ENCODE measurements at regions of chr4 and their contacts with region 1.

Region 1: DNA sequence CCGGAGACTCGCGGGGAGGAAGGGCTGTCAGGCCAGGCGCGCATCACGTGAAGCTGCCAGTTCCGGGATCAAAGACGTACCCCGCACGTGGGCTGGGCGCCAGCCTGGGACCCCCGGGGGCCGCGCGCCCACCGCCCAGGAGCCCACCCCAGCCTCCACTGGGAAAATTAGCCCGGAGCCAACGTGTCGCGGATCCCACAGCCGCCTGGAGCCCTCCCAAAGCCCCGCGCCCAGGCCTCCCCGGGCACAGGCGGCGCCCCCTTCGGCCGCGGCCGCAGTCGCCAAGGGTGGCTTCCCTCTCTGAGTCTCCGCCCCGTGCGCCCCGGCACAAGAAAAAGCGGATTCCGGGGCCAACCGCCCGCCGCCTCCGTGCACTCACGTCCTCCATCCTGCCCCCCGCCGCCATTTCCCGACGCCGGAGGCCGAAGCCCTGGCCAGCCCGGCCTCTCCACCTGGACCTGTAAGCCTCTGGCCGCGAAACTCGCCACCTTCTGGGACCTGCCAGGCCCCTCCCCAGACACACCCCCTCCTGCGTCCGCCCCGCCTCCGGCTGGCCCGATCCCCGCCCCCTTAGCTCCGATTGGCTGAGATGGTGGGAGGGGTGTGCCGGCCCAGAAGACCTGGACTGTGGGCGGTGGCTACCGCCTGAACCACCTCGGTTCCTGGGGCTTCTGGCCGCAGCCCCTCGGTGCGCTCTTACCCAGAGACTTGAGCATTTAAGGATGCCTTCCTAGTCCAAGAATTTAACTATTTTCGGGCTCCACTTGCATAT is at the start of gene TMEM192:
- DNase-seq: peak; percentile 90 to 93
- ATAC-seq: peak; percentile 93 to 95
- H3K4me3 ChIP-seq: peak within 1 kb of the TSS; percentile 76 to 98 (median 88)
- H3K27ac ChIP-seq: peak within 1 kb of the TSS; percentile 85 to 96 (median 92)
- H3K4me1 ChIP-seq: peaks cover 10 to 11% of the 10 kb centered on the region in 2 donors
- H3K27me3 ChIP-seq: peaks cover 0 to 2% (median 0%) of the 10 kb centered on the region in 3 donors
- CTCF ChIP-seq: peak in 3 of 5 experiments; percentile 17 to 30 (median 21)
- POLR2A ChIP-seq: peak; percentile 78 to 86
- total RNA-seq, gene TMEM192: 15.3 to 28.9 (median 17.8) TPM

Region 2: GRCh38 chr4:163166041-163166579 is 1946.4 kb before region 1 on chr4:
- in situ Hi-C with region 1: no loop called
- intact Hi-C with region 1: loop called (anchors 10 kb)
- DNase-seq: peak; percentile 20 to 49
- ATAC-seq: peak; percentile 40 to 64
- H3K4me3 ChIP-seq: peak overlapping the region; percentile 71 to 99 (median 84)
- H3K27ac ChIP-seq: peak overlapping the region; percentile 87 to 97 (median 93)
- H3K4me1 ChIP-seq: peaks cover 22 to 29% of the 10 kb centered on the region in 2 donors
- H3K27me3 ChIP-seq: no peaks in the 10 kb centered on the region
- CTCF ChIP-seq: no peak
- POLR2A ChIP-seq: no peak

Region 3: GRCh38 chr4:164748375-164748774 is 364.2 kb before region 1 on chr4:
- in situ Hi-C with region 1: no loop called
- intact Hi-C with region 1: no loop called
- DNase-seq: no peak
- ATAC-seq: no peak
- H3K4me3 ChIP-seq: no peak overlapping the region
- H3K27ac ChIP-seq: no peak overlapping the region
- H3K4me1 ChIP-seq: no peaks in the 10 kb centered on the region
- H3K27me3 ChIP-seq: no peaks in the 10 kb centered on the region
- CTCF ChIP-seq: no peak
- POLR2A ChIP-seq: no peak

Region 4: DNA sequence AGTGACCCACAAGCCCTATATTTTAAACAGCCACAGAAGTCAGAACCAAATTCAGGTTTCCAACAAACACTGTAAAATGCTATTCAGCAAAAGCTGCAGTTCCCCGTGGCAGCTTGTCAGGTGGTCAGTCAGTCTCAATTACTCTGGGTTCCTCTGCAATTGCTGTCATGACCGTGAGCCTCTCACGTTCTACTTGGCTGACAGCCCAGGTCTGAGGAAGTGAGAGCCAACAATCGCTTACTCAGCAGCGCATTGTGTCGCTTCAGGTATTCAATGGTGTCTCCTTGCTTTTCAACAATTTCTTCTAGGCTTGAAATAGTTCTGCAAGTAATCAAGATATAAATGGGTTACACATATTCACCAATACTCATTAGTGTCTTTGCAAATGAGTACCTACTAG is 33.1 kb before region 1 on chr4:
- in situ Hi-C with region 1: no loop called
- intact Hi-C with region 1: loop called (anchors 2 kb)
- DNase-seq: peak; percentile 78 to 83
- ATAC-seq: peak; percentile 100
- H3K4me3 ChIP-seq: no peak overlapping the region
- H3K27ac ChIP-seq: peak overlapping the region; percentile 34 to 56 (median 45)
- H3K4me1 ChIP-seq: peaks cover 2 to 4% of the 10 kb centered on the region in 2 donors
- H3K27me3 ChIP-seq: no peaks in the 10 kb centered on the region
- CTCF ChIP-seq: no peak
- POLR2A ChIP-seq: no peak

Region 5: DNA sequence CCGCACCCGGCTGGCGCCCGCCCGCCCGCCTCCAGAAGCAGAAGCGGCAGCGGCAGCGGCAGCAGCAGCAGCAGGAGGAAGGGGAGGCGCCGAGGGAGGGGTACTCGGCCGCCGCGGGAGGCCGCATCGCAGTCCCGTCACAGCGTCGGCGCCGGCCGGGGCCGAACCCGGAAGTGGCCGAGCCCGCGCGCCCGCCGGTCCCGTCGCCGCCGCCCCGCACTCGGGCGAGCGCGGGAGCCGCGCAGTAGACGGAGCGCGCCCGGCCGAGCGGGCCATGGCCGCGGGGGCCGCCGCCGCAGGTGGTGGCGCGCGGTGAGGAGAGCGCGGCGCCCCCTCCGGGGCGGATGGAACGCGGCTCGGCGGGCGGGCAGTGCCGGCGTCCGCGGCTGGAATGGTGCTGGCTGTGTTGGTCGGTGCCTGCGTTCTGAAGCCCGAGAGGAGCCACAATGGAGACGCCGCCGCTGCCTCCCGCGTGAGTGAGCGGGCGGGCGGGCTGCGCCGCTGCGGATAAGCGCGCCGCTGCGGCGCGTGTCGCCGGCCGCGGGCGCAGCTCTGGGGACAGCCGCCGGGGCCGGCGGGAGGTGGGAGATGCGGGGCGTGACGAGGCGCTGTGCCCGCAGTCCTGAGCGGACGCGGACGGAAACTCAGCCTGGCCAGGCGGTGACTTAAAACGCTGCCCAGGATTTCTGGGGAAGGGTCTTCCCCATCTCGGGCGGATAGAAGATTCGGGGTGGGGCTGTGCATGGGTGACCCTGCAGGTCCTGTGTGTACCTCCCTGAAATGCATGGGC is 95.1 kb after region 1 on chr4 and contains the start of gene KLHL2:
- in situ Hi-C with region 1: no loop called
- intact Hi-C with region 1: loop called (anchors 10 kb)
- DNase-seq: peak; percentile 41 to 42
- ATAC-seq: peak; percentile 81 to 83
- H3K4me3 ChIP-seq: peak within 1 kb of the TSS; percentile 62 to 83 (median 72)
- H3K27ac ChIP-seq: peak within 1 kb of the TSS in 3 of 4 donors; percentile 58 to 71 (median 66)
- H3K4me1 ChIP-seq: peaks cover 0 to 8% of the 10 kb centered on the region in 2 donors
- H3K27me3 ChIP-seq: no peaks in the 10 kb centered on the region
- CTCF ChIP-seq: no peak
- POLR2A ChIP-seq: peak in 1 of 2 donors; percentile 54
- total RNA-seq, gene KLHL2: 3.6 to 7.9 (median 6.4) TPM

Region 6: GRCh38 chr4:165312506-165312905 is 200.0 kb after region 1 on chr4:
- in situ Hi-C with region 1: no loop called
- intact Hi-C with region 1: no loop called
- DNase-seq: no peak
- ATAC-seq: no peak
- H3K4me3 ChIP-seq: no peak overlapping the region
- H3K27ac ChIP-seq: no peak overlapping the region
- H3K4me1 ChIP-seq: no peaks in the 10 kb centered on the region
- H3K27me3 ChIP-seq: no peaks in the 10 kb centered on the region
- CTCF ChIP-seq: no peak
- POLR2A ChIP-seq: no peak

Region 7: DNA sequence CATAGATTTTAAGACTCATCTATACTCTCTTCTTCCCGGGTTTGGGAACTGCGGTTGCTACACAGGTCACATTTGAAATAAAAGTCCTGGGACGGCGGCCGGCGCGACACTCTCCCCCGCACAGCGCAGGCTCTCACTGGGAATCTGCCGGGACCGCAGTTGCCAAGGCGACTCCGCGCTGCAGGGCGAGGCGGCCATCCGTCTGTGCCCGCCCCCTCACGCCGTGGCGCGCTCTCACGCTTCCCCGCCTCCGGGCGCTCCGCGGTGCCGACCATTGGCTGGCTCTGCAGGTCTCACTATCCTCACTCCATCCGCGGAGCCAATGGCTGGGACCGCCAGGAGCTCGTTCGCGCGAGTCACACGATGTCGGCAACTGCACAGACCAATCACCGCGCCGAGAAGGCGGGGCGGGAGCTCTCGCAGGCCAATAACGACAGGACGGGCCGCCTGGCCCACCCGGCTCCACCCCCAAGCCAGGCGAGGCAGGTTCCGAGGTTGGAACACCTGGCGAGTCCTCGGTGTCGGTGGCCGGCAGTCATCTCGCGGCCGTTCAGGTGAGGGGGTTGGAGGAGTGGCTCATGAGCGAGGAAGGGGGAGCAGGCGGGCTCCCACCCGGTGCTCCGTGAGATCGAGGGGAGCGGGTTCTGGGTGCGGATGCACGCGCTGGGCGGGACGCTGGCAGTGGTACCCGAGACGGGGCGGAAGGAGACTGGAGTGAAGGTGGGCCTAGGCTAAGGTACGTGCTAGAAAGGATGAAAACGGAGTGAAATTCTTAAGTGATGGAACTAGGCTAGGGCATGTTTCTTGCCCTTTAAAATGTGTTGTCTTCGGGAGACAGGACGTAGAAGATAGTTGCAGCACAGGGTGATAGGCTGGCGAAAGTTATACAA is 214.9 kb after region 1 on chr4 and contains the start of gene MSMO1:
- in situ Hi-C with region 1: loop called in 2 of 4 experiments (anchors 10 kb)
- intact Hi-C with region 1: loop called (anchors 1 kb)
- DNase-seq: peak; percentile 98 to 99
- ATAC-seq: peak; percentile 99
- H3K4me3 ChIP-seq: peak within 1 kb of the TSS; percentile 86 to 99 (median 92)
- H3K27ac ChIP-seq: peak within 1 kb of the TSS; percentile 70 to 82 (median 78)
- H3K4me1 ChIP-seq: peaks cover 10 to 14% of the 10 kb centered on the region in 2 donors
- H3K27me3 ChIP-seq: no peaks in the 10 kb centered on the region
- CTCF ChIP-seq: no peak
- POLR2A ChIP-seq: peak; percentile 42 to 84
- total RNA-seq, gene MSMO1: 3.9 to 7.7 (median 4.1) TPM

Measured in gastrocnemius medialis (tissue), 4 donors.